ENCODE measurements at regions of chr7 and their contacts with region 1.

Region 1: DNA sequence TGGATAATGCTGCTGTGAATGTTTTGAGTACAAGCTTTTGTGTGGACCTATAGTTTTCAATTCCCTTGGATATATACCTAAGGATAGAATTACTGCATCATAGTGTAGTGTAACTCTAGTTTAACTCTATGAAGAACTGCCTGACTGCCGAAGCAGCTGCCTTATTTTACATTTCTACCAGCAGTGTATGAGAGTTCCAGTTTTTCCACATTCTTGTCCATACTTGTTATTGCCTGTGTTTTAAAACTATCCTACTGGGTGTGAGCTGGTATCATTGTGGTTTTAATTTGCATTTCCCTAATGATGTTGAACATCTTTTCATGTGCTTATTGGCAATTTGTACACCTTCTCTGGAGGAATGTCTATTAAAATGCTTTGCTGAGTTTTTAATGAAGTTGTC is 15.7 kb downstream of the SEPTIN7 start:
- DNase-seq: no peak
- H3K4me3 Mint-ChIP-seq: no peak overlapping the region
- H3K27ac Mint-ChIP-seq: no peak overlapping the region
- H3K4me1 Mint-ChIP-seq: peaks cover 61% of the 10 kb centered on the region
- H3K27me3 Mint-ChIP-seq: no peaks in the 10 kb centered on the region

Region 2: DNA sequence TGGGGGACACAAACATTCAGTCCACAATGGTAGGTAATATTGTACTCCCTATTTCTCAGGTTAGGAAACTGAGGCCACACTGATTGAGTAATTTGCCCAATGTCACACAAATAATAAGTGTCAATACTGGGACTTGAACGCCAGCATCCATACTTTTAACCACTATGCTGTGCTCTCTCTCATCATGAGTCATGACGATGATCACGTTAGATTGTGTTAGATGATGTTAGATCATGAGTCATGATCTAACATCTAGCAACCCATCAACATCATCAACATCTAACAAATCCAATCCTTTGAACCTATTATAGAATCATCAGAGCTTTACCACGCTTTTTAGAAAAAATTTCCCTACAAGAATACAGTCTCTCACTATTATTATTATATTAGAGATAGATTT is 93.5 kb before region 1 on chr7:
- intact Hi-C with region 1: loop called (anchors 1 kb)
- DNase-seq: no peak
- H3K4me3 Mint-ChIP-seq: peak overlapping the region; percentile 24
- H3K27ac Mint-ChIP-seq: peak overlapping the region; percentile 56
- H3K4me1 Mint-ChIP-seq: peaks cover 49% of the 10 kb centered on the region
- H3K27me3 Mint-ChIP-seq: peaks cover 6% of the 10 kb centered on the region

Region 3: DNA sequence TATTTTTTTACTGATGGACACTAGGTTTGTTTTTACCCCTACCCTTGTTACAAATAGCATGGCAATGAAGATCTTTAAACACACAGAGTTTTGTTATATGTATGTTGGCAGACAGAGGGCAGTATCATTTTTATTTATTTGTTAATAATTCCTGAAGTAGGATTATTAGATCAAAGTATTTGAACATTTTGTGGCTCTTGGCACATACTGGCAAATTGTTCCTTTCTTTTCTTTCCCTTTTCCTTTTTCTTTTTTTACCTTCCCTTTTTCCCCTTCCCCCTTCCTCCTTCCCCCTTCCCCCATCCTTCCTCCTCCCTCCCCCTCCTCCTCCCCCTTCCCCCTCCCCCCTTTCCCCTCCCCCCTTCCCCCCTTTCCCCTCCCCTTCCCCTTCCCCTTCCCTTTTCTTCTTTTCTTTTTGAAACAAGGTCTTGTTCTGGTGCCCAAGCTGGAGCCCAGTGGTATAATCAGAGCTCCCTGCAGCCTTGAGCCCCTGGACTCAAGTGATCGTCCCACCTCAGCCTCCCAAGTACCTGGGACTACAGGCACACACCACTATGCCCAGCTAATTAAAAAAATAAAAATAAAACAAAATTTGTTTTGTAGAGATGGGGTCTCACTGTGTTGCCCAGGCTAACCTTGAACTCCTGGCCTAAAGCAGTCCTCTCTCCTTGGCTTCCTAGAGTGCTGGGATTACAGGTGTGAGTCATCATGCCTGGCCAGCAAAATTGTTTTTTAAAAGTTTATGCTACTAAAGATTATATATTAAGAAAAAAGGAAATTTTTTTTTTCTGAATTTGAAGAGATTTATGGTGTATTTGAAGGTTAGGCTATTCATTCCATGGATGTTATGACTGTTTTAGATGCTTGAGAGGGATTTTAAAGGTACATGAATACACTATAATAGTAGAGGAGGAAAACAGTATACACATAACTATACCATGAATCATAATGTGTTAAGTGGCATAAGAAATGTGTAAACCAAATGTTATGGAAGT is 23.6 kb after region 1 on chr7:
- intact Hi-C with region 1: loop called (anchors 1 kb)
- DNase-seq: no peak
- H3K4me3 Mint-ChIP-seq: no peak overlapping the region
- H3K27ac Mint-ChIP-seq: no peak overlapping the region
- H3K4me1 Mint-ChIP-seq: peaks cover 15% of the 10 kb centered on the region
- H3K27me3 Mint-ChIP-seq: no peaks in the 10 kb centered on the region